ENCODE measurements at regions of chr5 and their contacts with region 1.

Region 1: GRCh38 chr5:87121304-87122150 is 146.2 kb upstream of the RASA1 start:
- DNase-seq: peak; percentile 60
- H3K4me3 Mint-ChIP-seq: peak overlapping the region; percentile 25
- H3K27ac Mint-ChIP-seq: peak overlapping the region; percentile 89
- H3K4me1 Mint-ChIP-seq: peaks cover 56% of the 10 kb centered on the region
- H3K27me3 Mint-ChIP-seq: no peaks in the 10 kb centered on the region
- CTCF ChIP-seq: no peak

Region 2: GRCh38 chr5:87169300-87169991 is 47.9 kb after region 1 on chr5:
- CTCF ChIA-PET with region 1: no interaction called
- intact Hi-C with region 1: loop called (anchors 5 kb)
- DNase-seq: no peak
- H3K4me3 Mint-ChIP-seq: peak overlapping the region; percentile 37
- H3K27ac Mint-ChIP-seq: peak overlapping the region; percentile 91
- H3K4me1 Mint-ChIP-seq: peaks cover 40% of the 10 kb centered on the region
- H3K27me3 Mint-ChIP-seq: no peaks in the 10 kb centered on the region
- CTCF ChIP-seq: no peak

Region 3: GRCh38 chr5:87210743-87211430 is 89.4 kb after region 1 on chr5:
- CTCF ChIA-PET with region 1: no interaction called
- intact Hi-C with region 1: loop called (anchors 2 kb)
- DNase-seq: peak; percentile 58
- H3K4me3 Mint-ChIP-seq: peak overlapping the region; percentile 11
- H3K27ac Mint-ChIP-seq: peak overlapping the region; percentile 52
- H3K4me1 Mint-ChIP-seq: peaks cover 26% of the 10 kb centered on the region
- H3K27me3 Mint-ChIP-seq: no peaks in the 10 kb centered on the region
- CTCF ChIP-seq: no peak

Region 4: GRCh38 chr5:87267574-87268125 is 146.1 kb after region 1 on chr5 and contains the start of gene RASA1:
- CTCF ChIA-PET with region 1: interaction called, 12 read pairs
- intact Hi-C with region 1: loop called (anchors 2 kb)
- DNase-seq: peak; percentile 99
- H3K4me3 Mint-ChIP-seq: peak within 1 kb of the TSS; percentile 97
- H3K27ac Mint-ChIP-seq: peak within 1 kb of the TSS; percentile 93
- H3K4me1 Mint-ChIP-seq: peaks cover 31% of the 10 kb centered on the region
- H3K27me3 Mint-ChIP-seq: no peaks in the 10 kb centered on the region
- CTCF ChIP-seq: no peak
- total RNA-seq, gene RASA1: 163 and 193 TPM in 2 replicates

Region 5: GRCh38 chr5:87393331-87393730 is 271.8 kb after region 1 on chr5:
- CTCF ChIA-PET with region 1: no interaction called
- intact Hi-C with region 1: loop called (anchors 2 kb)
- DNase-seq: no peak
- H3K4me3 Mint-ChIP-seq: peak overlapping the region; percentile 5
- H3K27ac Mint-ChIP-seq: peak overlapping the region; percentile 79
- H3K4me1 Mint-ChIP-seq: peaks cover 60% of the 10 kb centered on the region
- H3K27me3 Mint-ChIP-seq: no peaks in the 10 kb centered on the region
- CTCF ChIP-seq: no peak

Measured in Calu3 (cell line).